Panc1 (cell line): ENCODE measurements at regions of chr10 and their contacts with region 1.

Region 1: DNA sequence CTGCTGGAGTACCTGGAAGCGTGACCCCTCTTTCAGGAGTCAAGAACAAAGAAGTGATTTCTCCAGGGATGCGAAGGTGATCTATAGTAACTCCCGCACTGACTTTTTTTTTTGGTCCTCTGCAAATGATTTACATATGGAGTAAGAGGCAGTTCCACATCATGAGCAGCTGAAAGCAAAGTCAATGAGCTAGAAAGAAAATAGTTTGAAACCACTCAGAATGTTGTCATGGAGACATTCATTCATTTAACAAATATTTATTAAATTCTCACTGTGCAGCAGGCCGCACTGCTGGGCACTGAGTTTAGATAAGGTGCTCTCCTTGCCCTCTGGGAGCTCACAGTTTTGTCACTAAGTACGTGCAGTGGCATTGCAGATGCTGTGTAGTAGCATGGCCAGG is 206.7 kb downstream of the CAMK1D start:
- DNase-seq: no peak
- ATAC-seq: no peak
- H3K4me3 ChIP-seq: no peak overlapping the region
- H3K27ac ChIP-seq: no peak overlapping the region
- H3K4me1 ChIP-seq: no peaks in the 10 kb centered on the region
- H3K27me3 ChIP-seq: no peaks in the 10 kb centered on the region
- CTCF ChIP-seq: no peak

Region 2: GRCh38 chr10:12768156-12769100 is 212.4 kb after region 1 on chr10:
- CTCF ChIA-PET with region 1: no interaction called
- POLR2A ChIA-PET with region 1: no interaction called
- in situ Hi-C with region 1: no loop called
- intact Hi-C with region 1: no loop called
- DNase-seq: peak; percentile 2
- ATAC-seq: no peak
- H3K4me3 ChIP-seq: no peak overlapping the region
- H3K27ac ChIP-seq: no peak overlapping the region
- H3K4me1 ChIP-seq: no peaks in the 10 kb centered on the region
- H3K27me3 ChIP-seq: no peaks in the 10 kb centered on the region
- CTCF ChIP-seq: no peak

Region 3: DNA sequence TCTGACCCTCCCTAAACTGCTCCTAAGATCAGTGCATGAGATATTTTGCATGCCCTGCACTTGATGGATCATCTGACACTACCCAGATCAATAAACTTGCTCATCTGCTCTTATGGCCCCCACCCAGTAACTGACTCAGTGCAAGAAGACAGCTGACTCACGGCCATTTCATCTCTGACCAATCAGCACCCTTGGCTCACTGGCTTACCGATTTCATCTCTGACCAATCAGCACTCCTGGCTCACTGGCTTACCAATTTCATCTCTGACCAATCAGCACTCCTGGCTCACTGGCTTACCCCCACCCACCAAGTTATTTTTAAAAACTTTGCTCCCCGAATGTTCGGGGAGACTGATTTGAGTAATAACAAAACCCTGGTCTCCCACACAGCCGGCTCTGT is 506.8 kb after region 1 on chr10:
- CTCF ChIA-PET with region 1: no interaction called
- POLR2A ChIA-PET with region 1: no interaction called
- in situ Hi-C with region 1: no loop called
- intact Hi-C with region 1: loop called (anchors 10 kb)
- DNase-seq: no peak
- ATAC-seq: no peak
- H3K4me3 ChIP-seq: no peak overlapping the region
- H3K27ac ChIP-seq: no peak overlapping the region
- H3K4me1 ChIP-seq: no peaks in the 10 kb centered on the region
- H3K27me3 ChIP-seq: peaks cover 3% of the 10 kb centered on the region; the same call in 1 of the 2 replicates
- CTCF ChIP-seq: no peak